Calu3 (cell line): ENCODE measurements at regions of chr10 and their contacts with region 1.

Region 1: DNA sequence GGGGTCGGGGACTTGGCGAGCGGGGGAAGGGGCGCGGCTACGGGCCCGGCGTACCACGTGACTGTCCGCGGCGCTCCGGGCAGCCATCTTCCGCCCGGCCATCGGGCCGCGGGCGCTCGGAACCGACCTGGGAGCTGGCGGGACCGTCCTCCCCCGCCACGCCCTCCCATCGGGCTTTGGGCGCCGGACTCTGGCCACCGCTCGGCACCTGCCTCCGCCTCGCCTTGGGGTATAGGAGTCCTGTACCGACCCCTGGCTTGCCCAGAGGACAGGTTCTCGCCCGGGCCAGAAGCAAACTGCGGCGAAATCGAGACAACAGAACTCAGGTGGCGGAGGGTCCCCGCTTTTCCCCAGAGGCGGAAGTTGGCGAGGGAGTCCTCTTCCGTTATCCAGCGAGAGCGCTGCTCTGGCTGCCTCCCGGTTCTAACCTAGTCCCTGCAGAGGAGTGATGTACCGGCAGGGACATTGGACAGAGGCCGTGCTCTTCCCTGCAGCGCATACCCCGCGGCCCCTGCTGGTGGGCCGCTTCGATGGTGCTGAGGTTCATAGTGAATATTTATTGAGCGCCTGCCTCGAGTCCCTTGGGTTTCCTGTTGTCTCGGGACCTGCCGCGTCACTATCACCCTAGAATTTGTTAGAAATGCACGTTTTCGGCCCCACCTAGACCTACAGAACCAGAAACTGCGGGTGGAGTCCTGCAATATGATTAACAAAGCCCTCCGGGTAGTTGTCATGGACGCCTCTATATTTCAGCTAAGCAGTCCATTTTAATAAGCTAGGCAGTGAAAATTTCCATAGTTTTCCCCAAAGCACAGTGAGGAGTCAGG is 1.3 kb upstream of the SGMS1 start:
- DNase-seq: peak; percentile 85
- H3K4me3 Mint-ChIP-seq: peak overlapping the region; percentile 78
- H3K27ac Mint-ChIP-seq: peak overlapping the region; percentile 66
- H3K4me1 Mint-ChIP-seq: no peaks in the 10 kb centered on the region
- H3K27me3 Mint-ChIP-seq: no peaks in the 10 kb centered on the region
- CTCF ChIP-seq: peak; percentile 42

Region 2: DNA sequence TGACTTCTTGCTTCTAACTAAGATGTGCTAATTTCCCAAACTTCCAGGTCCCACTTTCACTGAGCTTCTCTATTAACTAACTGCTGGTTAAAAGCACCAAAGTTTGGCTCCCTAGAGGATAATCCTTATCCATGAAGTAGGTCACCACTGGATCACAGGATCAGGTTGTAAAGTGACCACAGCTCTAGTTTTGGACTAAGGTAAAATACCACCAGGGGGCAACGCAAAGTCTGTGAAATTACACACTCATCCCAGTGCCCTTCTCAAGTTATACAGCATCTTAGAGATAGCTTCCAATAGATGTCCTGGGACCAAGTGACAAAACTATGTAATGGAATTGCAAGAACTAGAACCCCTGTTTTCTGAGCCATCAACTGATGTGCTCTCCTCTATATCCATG is 257.3 kb before region 1 on chr10:
- CTCF ChIA-PET with region 1: interaction called, 6 read pairs
- intact Hi-C with region 1: loop called (anchors 5 kb)
- DNase-seq: peak; percentile 30
- H3K4me3 Mint-ChIP-seq: no peak overlapping the region
- H3K27ac Mint-ChIP-seq: no peak overlapping the region
- H3K4me1 Mint-ChIP-seq: no peaks in the 10 kb centered on the region
- H3K27me3 Mint-ChIP-seq: no peaks in the 10 kb centered on the region
- CTCF ChIP-seq: no peak

Region 3: GRCh38 chr10:50417886-50418830 is 206.9 kb before region 1 on chr10:
- CTCF ChIA-PET with region 1: interaction called, 4 read pairs
- intact Hi-C with region 1: loop called (anchors 5 kb)
- DNase-seq: peak; percentile 81
- H3K4me3 Mint-ChIP-seq: peak overlapping the region; percentile 80
- H3K27ac Mint-ChIP-seq: peak overlapping the region; percentile 56
- H3K4me1 Mint-ChIP-seq: peaks cover 44% of the 10 kb centered on the region
- H3K27me3 Mint-ChIP-seq: no peaks in the 10 kb centered on the region
- CTCF ChIP-seq: no peak

Region 4: DNA sequence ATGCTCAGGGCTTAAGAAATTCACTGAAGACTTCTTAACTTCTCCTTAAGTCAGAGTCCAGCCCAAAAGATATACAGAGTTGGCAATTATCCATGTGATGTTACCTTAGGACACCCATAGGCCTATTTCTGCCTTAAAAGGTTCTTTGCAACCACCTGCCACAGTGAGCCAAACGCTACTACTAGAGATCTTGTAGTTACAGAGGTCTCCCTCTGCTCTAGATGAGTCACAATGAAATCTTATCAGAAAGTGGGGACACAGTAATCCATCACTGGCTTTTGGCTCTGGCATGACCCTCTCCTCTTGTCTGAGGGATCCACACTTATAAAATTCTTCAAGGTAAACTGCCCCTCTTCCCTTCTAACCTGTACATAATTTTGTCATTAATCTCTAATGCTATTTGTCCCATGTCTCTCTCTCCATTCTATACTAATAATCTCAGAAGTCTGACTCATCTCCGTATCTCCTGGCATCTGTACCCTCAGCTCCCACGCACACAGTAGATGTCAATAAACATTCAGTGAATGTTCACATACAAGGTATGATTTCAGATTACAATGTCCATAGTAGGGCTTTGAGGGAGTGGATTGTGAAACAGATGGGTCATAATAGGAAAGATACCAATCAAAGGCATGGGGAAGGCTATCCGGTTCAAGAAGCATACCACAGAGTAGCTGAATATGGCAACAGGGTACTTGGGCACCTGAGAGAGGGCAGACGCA is 113.4 kb before region 1 on chr10:
- CTCF ChIA-PET with region 1: no interaction called
- intact Hi-C with region 1: loop called (anchors 1 kb)
- DNase-seq: peak; percentile 24
- H3K4me3 Mint-ChIP-seq: peak overlapping the region; percentile 13
- H3K27ac Mint-ChIP-seq: peak overlapping the region; percentile 21
- H3K4me1 Mint-ChIP-seq: peaks cover 39% of the 10 kb centered on the region
- H3K27me3 Mint-ChIP-seq: no peaks in the 10 kb centered on the region
- CTCF ChIP-seq: no peak

Region 5: GRCh38 chr10:50561816-50562215 is 63.3 kb before region 1 on chr10:
- CTCF ChIA-PET with region 1: interaction called, 3 read pairs
- intact Hi-C with region 1: loop called (anchors 2 kb)
- DNase-seq: no peak
- H3K4me3 Mint-ChIP-seq: no peak overlapping the region
- H3K27ac Mint-ChIP-seq: no peak overlapping the region
- H3K4me1 Mint-ChIP-seq: peaks cover 13% of the 10 kb centered on the region
- H3K27me3 Mint-ChIP-seq: no peaks in the 10 kb centered on the region
- CTCF ChIP-seq: peak; percentile 50

Region 6: DNA sequence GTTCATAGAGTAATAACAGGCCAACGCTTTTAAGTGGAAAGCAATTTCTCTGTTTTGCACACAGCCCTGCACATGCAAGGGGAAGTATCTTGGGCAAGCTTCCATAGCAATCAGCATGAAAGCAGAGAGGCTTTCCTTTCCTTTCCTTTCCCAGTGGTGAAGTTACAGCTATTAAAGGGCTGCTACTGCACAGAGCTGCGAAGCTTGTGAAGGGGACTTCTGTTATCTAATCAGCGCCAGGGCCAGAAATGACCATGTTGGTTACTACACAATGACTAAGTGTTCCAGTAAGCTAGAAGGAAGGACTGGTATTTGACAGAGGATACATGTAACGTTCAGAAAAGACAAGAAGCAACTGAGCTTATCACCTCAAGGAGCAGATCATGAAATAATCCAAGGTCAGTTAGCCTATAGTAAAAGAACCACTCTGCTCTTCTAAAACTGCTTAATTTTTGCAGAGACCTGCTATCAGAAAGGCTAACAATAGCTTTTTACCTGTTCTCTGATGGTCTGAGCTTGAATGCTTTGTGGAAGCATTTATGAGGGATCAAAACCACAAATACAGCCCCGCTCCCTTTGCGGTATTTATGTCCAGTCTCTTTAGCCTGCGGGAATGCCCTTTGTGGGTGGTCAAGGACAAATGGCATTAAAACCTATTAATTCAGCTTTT is 47.3 kb before region 1 on chr10:
- CTCF ChIA-PET with region 1: interaction called, 6 read pairs
- intact Hi-C with region 1: loop called (anchors 5 kb)
- DNase-seq: peak; percentile 30
- H3K4me3 Mint-ChIP-seq: no peak overlapping the region
- H3K27ac Mint-ChIP-seq: no peak overlapping the region
- H3K4me1 Mint-ChIP-seq: peaks cover 73% of the 10 kb centered on the region
- H3K27me3 Mint-ChIP-seq: no peaks in the 10 kb centered on the region
- CTCF ChIP-seq: no peak